ENCODE measurements at regions of chr17 and their contacts with region 1.

Region 1: DNA sequence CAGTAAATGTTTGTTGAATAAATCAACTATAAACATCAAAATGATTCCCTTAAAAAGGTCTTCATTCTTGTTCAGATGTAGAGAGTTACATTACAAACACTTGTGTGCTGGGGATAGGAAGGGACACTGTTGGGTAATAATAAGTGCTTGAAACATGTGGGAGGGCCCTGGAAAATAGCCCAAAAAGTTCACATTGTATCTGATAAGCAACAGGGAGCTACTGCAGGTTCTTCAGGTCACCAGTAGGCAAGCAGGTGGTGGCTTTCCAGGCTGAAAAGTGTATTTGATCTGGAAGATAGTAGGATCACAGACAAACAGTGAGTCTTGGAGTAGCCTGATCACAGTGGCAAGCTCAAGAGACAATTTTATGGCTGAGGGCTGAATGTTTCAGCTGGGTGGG is 19.0 kb upstream of the ZNF652 start:
- DNase-seq: no peak
- ATAC-seq: no peak
- H3K4me3 ChIP-seq: no peak overlapping the region
- H3K4me3 Mint-ChIP-seq: no peak overlapping the region
- H3K27ac ChIP-seq: no peak overlapping the region
- H3K27ac Mint-ChIP-seq: peak overlapping the region in 1 of 2 donors; percentile 16
- H3K4me1 ChIP-seq: no peaks in the 10 kb centered on the region
- H3K4me1 Mint-ChIP-seq: peaks cover 0 to 4% (median 2%) of the 10 kb centered on the region in 3 donors
- H3K27me3 ChIP-seq: no peaks in the 10 kb centered on the region
- H3K27me3 Mint-ChIP-seq: no peaks in the 10 kb centered on the region

Region 2: DNA sequence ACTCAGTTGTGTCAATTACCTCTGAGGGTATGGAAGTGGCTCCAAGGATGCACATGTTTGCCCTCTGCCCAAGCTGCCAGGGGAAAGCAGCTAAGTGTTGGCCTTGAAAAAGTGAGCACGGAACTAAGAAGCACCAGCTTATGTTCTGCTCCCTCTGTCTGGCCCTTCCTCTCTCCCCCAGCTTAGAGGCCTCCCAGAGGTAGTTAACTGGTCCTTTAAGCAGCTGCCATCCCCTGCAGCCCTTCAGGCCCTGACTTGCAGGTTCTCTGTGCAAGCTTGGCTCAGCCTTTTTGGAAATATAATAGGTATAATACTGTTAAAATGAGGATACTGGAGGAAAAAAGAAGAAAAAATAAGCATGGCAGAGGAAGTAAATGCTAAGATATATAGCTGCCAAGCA is 479.8 kb before region 1 on chr17:
- CTCF ChIA-PET with region 1: no interaction called
- POLR2A ChIA-PET with region 1: interaction called in 1 of 2 experiments, 10 read pairs
- DNase-seq: no peak
- ATAC-seq: no peak
- H3K4me3 ChIP-seq: no peak overlapping the region
- H3K4me3 Mint-ChIP-seq: no peak overlapping the region
- H3K27ac ChIP-seq: no peak overlapping the region
- H3K27ac Mint-ChIP-seq: no peak overlapping the region
- H3K4me1 ChIP-seq: no peaks in the 10 kb centered on the region
- H3K4me1 Mint-ChIP-seq: no peaks in the 10 kb centered on the region
- H3K27me3 ChIP-seq: no peaks in the 10 kb centered on the region
- H3K27me3 Mint-ChIP-seq: no peaks in the 10 kb centered on the region

Region 3: GRCh38 chr17:49343273-49343672 is 37.8 kb before region 1 on chr17:
- CTCF ChIA-PET with region 1: no interaction called
- POLR2A ChIA-PET with region 1: interaction called in 1 of 2 experiments, 11 read pairs
- DNase-seq: peak in 1 of 35 experiments; percentile 47
- ATAC-seq: peak; percentile 27 to 41 (median 39)
- H3K4me3 ChIP-seq: peak overlapping the region in 1 of 2 donors; percentile 2
- H3K4me3 Mint-ChIP-seq: peak overlapping the region; percentile 60 to 75 (median 67)
- H3K27ac ChIP-seq: peak overlapping the region; percentile 62
- H3K27ac Mint-ChIP-seq: peak overlapping the region; percentile 88 to 92
- H3K4me1 ChIP-seq: peaks cover 17 to 77% of the 10 kb centered on the region in 2 experiments
- H3K4me1 Mint-ChIP-seq: peaks cover 61 to 74% (median 65%) of the 10 kb centered on the region in 3 donors
- H3K27me3 ChIP-seq: no peaks in the 10 kb centered on the region
- H3K27me3 Mint-ChIP-seq: no peaks in the 10 kb centered on the region

Region 4: GRCh38 chr17:49836111-49837030 is 455.3 kb after region 1 on chr17:
- CTCF ChIA-PET with region 1: no interaction called
- POLR2A ChIA-PET with region 1: no interaction called
- DNase-seq: no peak
- ATAC-seq: no peak
- H3K4me3 ChIP-seq: no peak overlapping the region
- H3K4me3 Mint-ChIP-seq: no peak overlapping the region
- H3K27ac ChIP-seq: no peak overlapping the region
- H3K27ac Mint-ChIP-seq: peak overlapping the region in 1 of 2 donors; percentile 25
- H3K4me1 ChIP-seq: no peaks in the 10 kb centered on the region
- H3K4me1 Mint-ChIP-seq: peaks cover 0 to 11% (median 7%) of the 10 kb centered on the region in 3 donors
- H3K27me3 ChIP-seq: no peaks in the 10 kb centered on the region
- H3K27me3 Mint-ChIP-seq: no peaks in the 10 kb centered on the region

Measured in T-cell (primary cell).